Gastrocnemius medialis (tissue), 4 donors: ENCODE measurements at regions of chr14 and their contacts with region 1.

Region 1: GRCh38 chr14:74109369-74109768 is 24.6 kb downstream of the LIN52 start:
- DNase-seq: no peak
- ATAC-seq: no peak
- H3K4me3 ChIP-seq: no peak overlapping the region
- H3K27ac ChIP-seq: no peak overlapping the region
- H3K4me1 ChIP-seq: no peaks in the 10 kb centered on the region
- H3K27me3 ChIP-seq: no peaks in the 10 kb centered on the region
- CTCF ChIP-seq: no peak
- POLR2A ChIP-seq: no peak

Region 2: GRCh38 chr14:74249433-74250375 is 140.3 kb after region 1 on chr14:
- in situ Hi-C with region 1: loop called in 3 of 4 experiments (anchors 5 to 10 kb)
- intact Hi-C with region 1: loop called (anchors 2 kb)
- DNase-seq: no peak
- ATAC-seq: no peak
- H3K4me3 ChIP-seq: no peak overlapping the region
- H3K27ac ChIP-seq: no peak overlapping the region
- H3K4me1 ChIP-seq: no peaks in the 10 kb centered on the region
- H3K27me3 ChIP-seq: peaks cover 0 to 5% (median 0%) of the 10 kb centered on the region in 3 donors
- CTCF ChIP-seq: no peak
- POLR2A ChIP-seq: no peak

Region 3: GRCh38 chr14:74257078-74257989 is 148.0 kb after region 1 on chr14:
- in situ Hi-C with region 1: loop called in 3 of 4 experiments (anchors 5 to 10 kb)
- intact Hi-C with region 1: loop called (anchors 2 kb)
- DNase-seq: no peak
- ATAC-seq: peak; percentile 74 to 87
- H3K4me3 ChIP-seq: peak overlapping the region; percentile 66 to 83 (median 68)
- H3K27ac ChIP-seq: no peak overlapping the region
- H3K4me1 ChIP-seq: peaks cover 3 to 13% of the 10 kb centered on the region in 2 donors
- H3K27me3 ChIP-seq: peaks cover 10 to 13% (median 11%) of the 10 kb centered on the region in 3 donors
- CTCF ChIP-seq: peak; percentile 60 to 96 (median 74)
- POLR2A ChIP-seq: no peak